Naive thymus-derived CD4-positive, alpha-beta T cell (primary cell): ENCODE measurements at regions of chr16 and their contacts with region 1.

Region 1: GRCh38 chr16:77236063-77236511 is 36.9 kb downstream of the SYCE1L start:
- DNase-seq: peak; percentile 74 to 89 (median 83)
- ATAC-seq: peak; percentile 100
- H3K4me3 ChIP-seq: peak overlapping the region; percentile 42
- H3K4me3 Mint-ChIP-seq: peak overlapping the region; percentile 57 to 87 (median 76)
- H3K27ac ChIP-seq: no peak overlapping the region
- H3K27ac Mint-ChIP-seq: peak overlapping the region in 2 of 9 donors; percentile 13 to 48
- H3K4me1 ChIP-seq: no peaks in the 10 kb centered on the region
- H3K4me1 Mint-ChIP-seq: peaks cover 0 to 6% (median 5%) of the 10 kb centered on the region in 7 donors
- H3K27me3 ChIP-seq: no peaks in the 10 kb centered on the region
- H3K27me3 Mint-ChIP-seq: peaks cover 12 to 30% (median 18%) of the 10 kb centered on the region in 5 donors

Region 2: DNA sequence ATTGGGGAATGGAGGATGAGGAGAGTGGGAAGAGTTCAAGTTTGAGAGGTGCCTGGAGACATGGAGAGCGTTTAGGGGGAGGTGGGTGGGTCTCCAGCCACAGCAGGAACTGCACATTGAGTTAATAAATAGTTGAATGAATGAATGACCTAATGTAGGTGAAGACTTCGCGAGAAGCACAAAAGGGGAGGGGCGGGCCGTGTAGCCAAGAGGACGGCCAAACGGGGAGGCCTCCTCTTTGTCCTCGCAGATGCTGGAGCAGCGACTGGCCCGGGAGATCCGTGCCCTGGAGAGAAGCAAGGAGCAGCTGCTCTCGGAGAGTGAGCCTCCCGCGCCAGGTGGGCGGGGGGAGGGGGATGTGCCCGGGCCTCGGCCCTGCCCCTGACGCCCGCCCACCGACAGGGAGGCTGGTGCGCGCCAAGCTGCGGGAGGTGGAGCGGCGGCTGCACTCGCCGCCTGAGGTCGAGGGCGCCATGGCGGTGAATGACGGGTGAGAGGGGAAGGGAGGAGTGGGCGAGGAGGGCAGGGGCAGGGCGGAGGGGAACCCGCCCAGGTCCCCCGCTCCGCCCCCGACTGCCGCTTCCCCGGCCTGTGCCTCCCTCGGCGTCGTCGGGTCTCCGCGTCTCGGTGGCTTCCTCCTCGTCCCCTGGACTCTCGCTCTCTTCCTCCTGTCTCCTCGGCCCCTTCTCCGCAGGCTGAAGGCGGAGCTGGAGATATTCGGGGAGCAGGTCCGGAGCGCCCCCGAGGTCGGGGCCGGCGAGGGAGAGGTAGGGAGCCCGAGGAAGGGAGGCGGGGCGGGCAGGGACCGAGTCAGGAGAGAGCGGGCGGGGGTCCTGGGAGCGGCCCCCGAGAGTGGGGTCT is 24.0 kb before region 1 on chr16:
- CTCF ChIA-PET with region 1: no interaction called
- POLR2A ChIA-PET with region 1: interaction called, 3 read pairs
- intact Hi-C with region 1: loop called in 1 of 2 experiments (anchors 1 kb)
- DNase-seq: peak; percentile 57 to 84 (median 76)
- ATAC-seq: peak; percentile 86
- H3K4me3 ChIP-seq: peak overlapping the region; percentile 69
- H3K4me3 Mint-ChIP-seq: peak overlapping the region; percentile 83 to 92 (median 88)
- H3K27ac ChIP-seq: peak overlapping the region; percentile 85
- H3K27ac Mint-ChIP-seq: peak overlapping the region; percentile 56 to 92 (median 81)
- H3K4me1 ChIP-seq: peaks cover 0 to 4% of the 10 kb centered on the region in 2 donors
- H3K4me1 Mint-ChIP-seq: peaks cover 8 to 15% (median 14%) of the 10 kb centered on the region in 7 donors
- H3K27me3 ChIP-seq: no peaks in the 10 kb centered on the region
- H3K27me3 Mint-ChIP-seq: peaks cover 0 to 5% (median 0%) of the 10 kb centered on the region in 5 donors

Region 3: GRCh38 chr16:77469634-77470033 is 233.5 kb after region 1 on chr16:
- CTCF ChIA-PET with region 1: no interaction called
- POLR2A ChIA-PET with region 1: interaction called, 3 read pairs
- intact Hi-C with region 1: loop called in 1 of 2 experiments (anchors 10 kb)
- DNase-seq: no peak
- ATAC-seq: no peak
- H3K4me3 ChIP-seq: no peak overlapping the region
- H3K4me3 Mint-ChIP-seq: no peak overlapping the region
- H3K27ac ChIP-seq: no peak overlapping the region
- H3K27ac Mint-ChIP-seq: no peak overlapping the region
- H3K4me1 ChIP-seq: no peaks in the 10 kb centered on the region
- H3K4me1 Mint-ChIP-seq: no peaks in the 10 kb centered on the region
- H3K27me3 ChIP-seq: no peaks in the 10 kb centered on the region
- H3K27me3 Mint-ChIP-seq: peaks cover 0 to 31% (median 22%) of the 10 kb centered on the region in 5 donors

Region 4: DNA sequence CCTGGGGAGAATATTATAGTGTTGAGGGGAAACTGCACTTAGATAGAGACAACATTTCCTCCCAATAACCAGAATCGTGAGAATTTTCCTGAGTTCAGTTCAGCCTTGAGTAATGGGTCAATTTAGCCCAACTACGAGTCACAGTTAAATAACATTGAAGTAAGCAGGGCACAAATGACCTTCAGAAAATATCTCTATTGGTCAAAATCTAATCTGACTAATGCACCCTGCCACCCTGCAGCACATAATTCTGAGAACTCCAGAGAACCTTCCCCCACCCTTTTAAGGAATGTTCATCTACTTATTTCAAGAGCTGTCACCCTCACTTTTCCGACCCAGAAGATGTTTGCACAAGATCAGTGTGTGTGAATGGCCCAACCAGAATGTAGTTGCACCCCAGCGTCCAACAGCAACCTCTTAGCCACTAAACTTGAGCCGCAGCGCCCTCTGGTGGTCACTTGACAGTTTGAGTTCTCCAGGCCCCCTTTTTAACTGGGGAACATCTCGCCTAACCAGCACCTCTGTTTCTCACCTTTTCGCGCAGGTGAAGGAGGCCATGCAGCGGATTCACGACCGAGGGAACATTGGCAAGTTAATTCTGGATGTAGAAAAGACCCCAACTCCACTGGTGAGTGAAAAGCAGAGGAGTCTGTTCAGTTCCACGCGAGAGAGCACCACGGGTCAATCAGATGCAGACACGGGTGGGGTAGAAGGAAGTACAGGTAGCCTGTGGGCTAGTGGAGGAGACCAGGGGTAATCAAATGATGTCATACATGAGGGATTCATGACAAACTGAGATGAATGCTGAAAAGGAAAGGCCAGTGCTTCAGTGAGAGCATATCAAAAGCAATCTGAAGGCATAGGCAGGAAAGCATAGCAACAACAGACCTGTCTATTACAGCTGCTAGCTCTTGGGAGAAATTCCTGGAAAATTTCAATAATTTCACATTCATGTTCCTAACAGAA is 735.5 kb after region 1 on chr16:
- CTCF ChIA-PET with region 1: no interaction called
- POLR2A ChIA-PET with region 1: no interaction called
- intact Hi-C with region 1: loop called (anchors 5 kb)
- DNase-seq: peak; percentile 21 to 73 (median 55)
- ATAC-seq: peak; percentile 55
- H3K4me3 ChIP-seq: no peak overlapping the region
- H3K4me3 Mint-ChIP-seq: no peak overlapping the region
- H3K27ac ChIP-seq: no peak overlapping the region
- H3K27ac Mint-ChIP-seq: no peak overlapping the region
- H3K4me1 ChIP-seq: no peaks in the 10 kb centered on the region
- H3K4me1 Mint-ChIP-seq: no peaks in the 10 kb centered on the region
- H3K27me3 ChIP-seq: no peaks in the 10 kb centered on the region
- H3K27me3 Mint-ChIP-seq: peaks cover 2 to 18% (median 12%) of the 10 kb centered on the region in 5 donors